Breast epithelium (tissue), 4 donors: ENCODE measurements at regions of chr11 and their contacts with region 1.

Region 1: GRCh38 chr11:14892036-14892567 is at the start of gene CYP2R1:
- DNase-seq: peak; percentile 94 to 95
- H3K4me3 ChIP-seq: peak within 1 kb of the TSS; percentile 69 to 86 (median 80)
- H3K27ac ChIP-seq: peak within 1 kb of the TSS; percentile 95 to 96
- H3K4me1 ChIP-seq: peaks cover 0 to 3% of the 10 kb centered on the region in 2 donors
- H3K27me3 ChIP-seq: no peaks in the 10 kb centered on the region
- CTCF ChIP-seq: no peak
- POLR2A ChIP-seq: no peak
- total RNA-seq, gene CYP2R1: 7.7 to 25.6 (median 21.0) TPM

Region 2: DNA sequence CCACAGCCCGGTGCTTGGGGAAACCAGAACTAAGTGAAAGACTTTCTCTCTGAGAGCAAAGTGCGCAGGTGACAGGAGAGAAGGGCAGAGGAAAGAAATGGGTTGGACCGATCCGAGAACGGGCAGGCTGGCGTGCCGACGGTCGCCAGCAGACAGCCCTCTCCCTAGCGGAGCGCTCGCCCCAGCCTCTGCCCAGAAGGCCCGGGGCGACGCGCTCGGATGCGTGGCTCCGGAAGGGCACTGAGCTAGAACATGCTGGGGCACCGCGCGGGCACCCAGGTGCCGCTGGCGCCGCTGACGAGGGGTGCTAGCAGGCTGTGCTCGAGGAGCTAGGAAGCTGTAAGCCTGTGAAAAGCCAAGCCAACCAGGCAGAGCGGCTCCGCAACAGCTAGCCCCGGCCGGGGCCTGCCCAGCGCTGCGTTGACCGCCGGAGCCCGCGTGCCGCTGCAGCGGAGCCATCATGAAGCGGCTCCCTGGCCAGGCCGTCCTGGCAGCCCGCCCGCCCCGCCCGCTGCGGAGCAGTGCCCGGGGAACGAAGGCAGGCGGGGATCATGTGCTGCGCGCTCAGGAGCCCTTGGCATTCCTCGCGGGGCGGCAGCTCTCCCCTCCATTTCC is 511.0 kb before region 1 on chr11:
- intact Hi-C with region 1: no loop called
- DNase-seq: peak; percentile 55 to 62
- H3K4me3 ChIP-seq: peak overlapping the region; percentile 38 to 73 (median 61)
- H3K27ac ChIP-seq: peak overlapping the region; percentile 62 to 75
- H3K4me1 ChIP-seq: no peaks in the 10 kb centered on the region
- H3K27me3 ChIP-seq: no peaks in the 10 kb centered on the region
- CTCF ChIP-seq: no peak
- POLR2A ChIP-seq: no peak

Region 3: GRCh38 chr11:14544611-14545010 is 347.5 kb before region 1 on chr11:
- intact Hi-C with region 1: loop called (anchors 10 kb)
- DNase-seq: no peak
- H3K4me3 ChIP-seq: no peak overlapping the region
- H3K27ac ChIP-seq: no peak overlapping the region
- H3K4me1 ChIP-seq: no peaks in the 10 kb centered on the region
- H3K27me3 ChIP-seq: no peaks in the 10 kb centered on the region
- CTCF ChIP-seq: no peak
- POLR2A ChIP-seq: no peak